Heart left ventricle (tissue), 16 donors: ENCODE measurements at regions of chr2 and their contacts with region 1.

Region 1: DNA sequence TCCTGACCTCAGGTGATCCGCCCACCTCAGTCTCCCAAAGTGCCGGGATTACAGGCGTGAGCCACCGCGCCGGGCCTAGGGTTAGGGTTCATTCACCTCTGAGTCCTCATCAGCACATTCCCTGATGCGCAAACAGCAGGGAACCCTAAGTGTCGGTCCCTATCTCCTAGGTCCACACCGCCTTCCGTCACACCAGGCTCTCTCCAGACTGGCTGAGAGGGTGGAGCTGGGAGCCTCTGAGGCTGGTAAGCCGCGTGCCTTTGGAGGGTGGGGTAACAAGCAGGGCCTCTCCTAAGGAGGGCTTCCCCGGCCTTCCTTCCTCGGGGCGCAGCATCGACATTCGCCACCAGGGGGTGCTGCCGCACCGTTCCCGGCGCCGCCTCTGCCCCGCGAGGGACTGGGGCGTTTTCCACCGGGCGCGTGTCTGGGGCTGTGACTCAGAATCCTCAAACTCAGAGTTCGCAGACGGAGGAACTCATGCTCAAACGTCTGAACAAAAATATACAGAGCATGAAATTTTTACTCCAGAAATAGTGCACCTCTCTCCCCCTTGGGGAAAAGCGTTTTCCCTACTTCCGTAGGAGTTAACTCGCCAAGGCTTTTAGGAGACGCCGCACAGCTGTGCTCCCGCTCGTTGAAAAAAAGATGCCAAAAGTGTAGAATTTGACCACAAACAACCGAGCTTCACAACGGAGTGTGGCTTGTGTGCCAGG is 63.9 kb upstream of the ASAP2 start:
- DNase-seq: peak; percentile 85 to 94 (median 88)
- ATAC-seq: peak; percentile 74 to 93 (median 90)
- H3K4me3 ChIP-seq: peak overlapping the region in 10 of 12 donors; percentile 3 to 46 (median 30)
- H3K27ac ChIP-seq: peak overlapping the region in 10 of 12 donors; percentile 10 to 74 (median 64)
- H3K4me1 ChIP-seq: peaks cover 0 to 17% (median 10%) of the 10 kb centered on the region in 12 donors
- H3K27me3 ChIP-seq: peaks cover 0 to 4% (median 0%) of the 10 kb centered on the region in 9 donors
- CTCF ChIP-seq: peak; percentile 97 to 100 (median 99)
- POLR2A ChIP-seq: no peak

Region 2: DNA sequence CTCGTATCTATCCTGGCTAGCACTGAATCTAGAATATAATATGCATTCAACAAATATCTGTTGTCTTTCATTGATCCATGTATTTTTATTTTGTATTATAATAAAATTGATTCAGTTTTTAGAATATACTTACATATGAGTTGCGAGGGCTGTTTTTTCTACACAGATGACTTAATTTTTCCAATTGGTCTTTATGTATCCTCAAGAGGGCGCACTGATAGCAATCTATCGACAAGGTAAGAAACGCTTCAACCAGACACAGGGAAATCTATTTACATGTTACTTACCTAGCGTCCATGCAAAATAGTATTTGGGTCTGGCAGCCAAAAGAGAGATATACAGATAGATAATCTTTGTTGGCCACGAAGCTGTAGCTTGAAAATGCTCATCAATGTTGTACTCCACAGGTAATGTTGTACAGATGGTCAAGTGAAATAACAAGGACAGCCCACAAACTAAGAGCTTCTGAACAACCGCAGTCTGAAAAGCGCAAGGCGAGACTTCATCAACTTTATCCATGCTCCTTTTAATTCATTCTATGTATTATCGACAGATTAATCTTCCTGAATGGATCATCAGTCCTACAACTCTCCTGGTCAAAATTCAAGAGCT is 269.8 kb before region 1 on chr2:
- intact Hi-C with region 1: loop called (anchors 2 to 5 kb)
- DNase-seq: no peak
- ATAC-seq: no peak
- H3K4me3 ChIP-seq: no peak overlapping the region
- H3K27ac ChIP-seq: no peak overlapping the region
- H3K4me1 ChIP-seq: no peaks in the 10 kb centered on the region
- H3K27me3 ChIP-seq: no peaks in the 10 kb centered on the region
- CTCF ChIP-seq: peak in 11 of 12 donors; percentile 30 to 66 (median 49)
- POLR2A ChIP-seq: no peak

Region 3: GRCh38 chr2:9205963-9206948 is 63.5 kb after region 1 on chr2 and contains the start of gene ASAP2:
- intact Hi-C with region 1: loop called in 4 of 10 experiments (anchors 5 to 10 kb)
- DNase-seq: peak; percentile 74 to 89 (median 77)
- ATAC-seq: peak; percentile 63 to 85 (median 82)
- H3K4me3 ChIP-seq: peak within 1 kb of the TSS; percentile 60 to 99 (median 86)
- H3K27ac ChIP-seq: peak within 1 kb of the TSS; percentile 56 to 94 (median 88)
- H3K4me1 ChIP-seq: peaks cover 0 to 40% (median 18%) of the 10 kb centered on the region in 12 donors
- H3K27me3 ChIP-seq: peaks cover 0 to 12% (median 0%) of the 10 kb centered on the region in 9 donors
- CTCF ChIP-seq: peak; percentile 65 to 94 (median 82)
- POLR2A ChIP-seq: no peak
- total RNA-seq, gene ASAP2: 7.4 to 17.0 (median 12.9) TPM

Region 4: GRCh38 chr2:9370746-9371145 is 228.0 kb after region 1 on chr2:
- intact Hi-C with region 1: loop called in 1 of 10 experiments (anchors 2 kb)
- DNase-seq: no peak
- ATAC-seq: no peak
- H3K4me3 ChIP-seq: no peak overlapping the region
- H3K27ac ChIP-seq: no peak overlapping the region
- H3K4me1 ChIP-seq: peaks cover 0 to under 1% (median 0%) of the 10 kb centered on the region in 12 donors
- H3K27me3 ChIP-seq: no peaks in the 10 kb centered on the region
- CTCF ChIP-seq: no peak
- POLR2A ChIP-seq: no peak

Region 5: DNA sequence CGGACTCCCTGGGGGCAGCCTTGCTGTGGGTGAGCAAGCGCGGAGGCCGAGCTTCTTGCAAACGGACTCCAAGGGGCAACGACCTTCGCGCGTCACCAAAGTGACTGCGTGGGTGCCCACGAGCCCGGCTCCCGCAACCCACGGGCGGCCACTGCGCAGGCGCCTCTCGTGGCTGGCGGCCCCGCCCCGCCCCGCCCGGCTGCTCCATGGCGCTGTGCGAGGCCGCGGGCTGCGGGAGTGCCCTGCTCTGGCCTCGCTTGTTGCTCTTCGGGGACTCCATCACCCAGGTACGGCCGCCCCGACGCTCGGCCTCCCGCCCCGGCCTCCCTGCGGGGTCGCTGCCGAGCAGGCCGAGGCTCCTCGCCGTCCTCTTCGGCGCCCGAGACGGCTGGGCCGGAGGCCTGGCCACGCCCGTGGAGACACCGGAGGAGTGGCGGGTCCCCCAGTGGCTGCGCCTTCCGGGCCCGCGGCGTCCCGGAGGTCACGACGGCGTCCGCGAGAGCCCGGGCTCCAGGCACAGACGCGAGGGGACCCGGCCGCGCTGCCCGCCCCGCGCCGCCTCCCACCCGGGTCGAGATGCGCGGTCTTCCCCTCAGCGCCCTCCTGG is 331.8 kb after region 1 on chr2 and contains the start of gene IAH1:
- intact Hi-C with region 1: loop called in 1 of 10 experiments (anchors 5 kb)
- DNase-seq: peak; percentile 60 to 86 (median 75)
- ATAC-seq: peak; percentile 57 to 93 (median 82)
- H3K4me3 ChIP-seq: peak within 1 kb of the TSS; percentile 59 to 93 (median 82)
- H3K27ac ChIP-seq: peak within 1 kb of the TSS; percentile 52 to 93 (median 84)
- H3K4me1 ChIP-seq: peaks cover 0 to 42% (median 32%) of the 10 kb centered on the region in 12 donors
- H3K27me3 ChIP-seq: no peaks in the 10 kb centered on the region
- CTCF ChIP-seq: peak in 2 of 12 donors; percentile 11 to 12
- POLR2A ChIP-seq: peak in 1 of 2 donors; percentile 65
- total RNA-seq, gene IAH1: 58.4 to 101 (median 78.0) TPM